GM10248 (cell line): ENCODE measurements at regions of chr22 and their contacts with region 1.

Region 1: DNA sequence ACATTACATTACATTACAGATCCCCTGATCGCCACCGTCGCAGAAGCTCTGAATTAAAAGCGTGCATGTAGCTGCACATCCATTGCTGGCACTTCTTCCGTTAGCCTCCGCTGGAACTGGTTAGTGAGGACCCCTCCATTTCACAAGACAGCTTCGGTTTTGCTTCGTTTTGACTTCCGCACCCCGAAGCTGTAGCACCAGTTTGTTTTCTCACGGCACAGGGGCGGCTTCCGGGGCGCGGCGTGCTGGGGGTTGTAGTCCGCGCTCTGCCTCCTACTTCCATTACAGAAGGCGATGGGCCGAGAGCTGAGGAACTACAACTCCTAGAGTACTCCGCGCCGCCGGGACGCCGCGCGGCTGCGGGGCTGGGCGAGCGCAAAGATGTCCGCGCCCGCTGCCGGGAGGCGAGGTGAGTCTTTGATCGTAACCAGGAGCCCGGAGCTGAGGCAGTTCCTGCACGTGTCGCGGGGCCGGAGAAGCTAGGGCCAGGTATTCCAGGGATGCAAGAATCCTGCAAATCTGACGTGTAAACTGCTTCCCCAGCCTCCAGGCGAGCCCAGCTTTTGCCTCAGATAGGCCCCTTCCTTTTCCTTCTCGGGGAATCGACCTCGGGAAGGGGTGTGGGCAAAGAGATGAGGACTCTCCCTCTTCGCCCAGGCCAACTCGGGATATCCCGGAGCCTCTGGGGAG is at the start of gene PEX26:
- DNase-seq: peak; percentile 95
- CTCF ChIP-seq: no peak

Region 2: GRCh38 chr22:17612057-17612456 is 465.7 kb before region 1 on chr22:
- CTCF ChIA-PET with region 1: no interaction called
- POLR2A ChIA-PET with region 1: no interaction called
- DNase-seq: no peak
- CTCF ChIP-seq: no peak

Region 3: GRCh38 chr22:17785185-17786184 is 292.3 kb before region 1 on chr22:
- CTCF ChIA-PET with region 1: interaction called, 12 read pairs
- POLR2A ChIA-PET with region 1: no interaction called
- DNase-seq: no peak
- CTCF ChIP-seq: peak; percentile 81

Region 4: DNA sequence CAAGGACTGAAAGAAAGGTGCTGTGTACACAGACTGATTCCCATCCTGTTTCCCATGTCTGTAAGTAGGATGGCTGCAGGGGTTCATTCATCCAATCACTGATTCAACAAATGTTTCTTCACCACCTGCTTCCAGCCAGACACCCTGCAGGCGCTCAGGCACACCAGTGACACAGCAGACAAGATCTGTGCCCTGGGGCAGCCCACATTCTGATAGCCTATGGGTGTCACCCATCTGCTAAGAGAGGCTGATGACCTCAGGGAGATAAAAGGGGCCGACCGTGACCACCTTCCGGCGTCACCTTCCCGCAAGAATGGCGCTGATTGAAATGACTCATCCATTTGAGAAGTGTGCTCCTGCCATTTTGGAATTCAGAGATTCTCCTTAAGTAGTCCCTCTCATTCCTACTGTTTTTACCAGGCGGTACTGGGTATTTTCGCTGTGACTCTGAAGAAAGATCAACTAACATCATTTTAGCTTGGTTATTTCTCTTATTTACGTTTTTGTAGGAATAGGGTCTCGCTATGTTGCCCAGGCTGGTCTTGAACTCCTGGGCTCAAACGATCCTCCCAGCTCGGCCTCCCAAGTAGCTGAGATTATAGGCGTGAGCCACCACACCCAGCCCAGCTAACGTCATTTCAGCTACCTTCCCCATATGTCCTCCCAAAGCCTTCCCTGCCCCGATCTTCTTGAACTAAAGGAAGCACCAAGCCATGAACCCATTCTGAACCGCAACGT is 230.3 kb before region 1 on chr22:
- CTCF ChIA-PET with region 1: interaction called, 15 read pairs
- POLR2A ChIA-PET with region 1: no interaction called
- DNase-seq: no peak
- CTCF ChIP-seq: no peak

Region 5: GRCh38 chr22:17910561-17911311 is 167.0 kb before region 1 on chr22:
- CTCF ChIA-PET with region 1: interaction called, 14 read pairs
- POLR2A ChIA-PET with region 1: no interaction called
- DNase-seq: no peak
- CTCF ChIP-seq: peak; percentile 29

Region 6: DNA sequence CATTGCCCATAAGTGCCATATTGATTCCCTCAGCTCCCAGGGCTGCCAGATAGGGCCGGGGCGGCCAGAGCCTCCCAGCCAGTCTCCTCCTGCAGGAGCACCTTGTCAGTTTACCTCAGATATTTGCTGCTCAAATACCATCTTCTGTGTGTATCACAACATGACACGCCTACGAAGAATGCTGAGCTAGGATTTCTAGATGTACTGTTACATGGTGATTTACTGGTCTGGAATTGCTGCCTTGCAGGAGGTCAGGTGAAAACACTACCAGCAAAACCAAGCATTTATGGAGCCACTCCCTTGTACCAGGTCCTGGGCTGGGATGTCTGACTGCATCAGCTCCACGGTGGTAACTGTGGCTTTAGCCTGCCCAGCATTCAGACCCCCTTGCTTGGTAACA is 65.3 kb before region 1 on chr22:
- CTCF ChIA-PET with region 1: interaction called, 12 read pairs
- POLR2A ChIA-PET with region 1: no interaction called
- DNase-seq: no peak
- CTCF ChIP-seq: no peak

Region 7: GRCh38 chr22:18057568-18058209 is 20.1 kb before region 1 on chr22:
- CTCF ChIA-PET with region 1: interaction called, 91 read pairs
- POLR2A ChIA-PET with region 1: no interaction called
- DNase-seq: peak; percentile 75
- CTCF ChIP-seq: no peak

Region 8: DNA sequence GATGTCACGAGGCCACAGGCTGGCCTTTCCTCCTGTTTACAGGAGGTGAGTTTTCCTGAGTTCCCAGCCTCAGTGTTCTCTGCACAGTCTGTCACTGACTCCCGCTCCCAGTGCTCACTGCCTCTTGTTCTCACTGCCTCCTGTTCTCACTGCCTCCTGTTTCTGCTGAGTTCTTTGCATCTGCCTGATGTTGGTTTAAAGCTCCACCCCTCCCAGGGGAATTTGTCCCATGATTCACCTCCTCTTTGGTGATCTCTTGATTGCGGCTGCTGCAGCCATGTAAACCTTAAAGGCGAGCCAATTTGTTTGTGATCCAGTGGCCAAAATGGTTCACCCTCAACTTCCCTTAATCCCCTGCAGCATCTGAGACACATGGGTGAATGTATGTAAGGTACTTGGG is 26.8 kb after region 1 on chr22:
- CTCF ChIA-PET with region 1: interaction called, 29 read pairs
- POLR2A ChIA-PET with region 1: interaction called, 8 read pairs
- DNase-seq: no peak
- CTCF ChIP-seq: no peak